ENCODE measurements at regions of chr20 and their contacts with region 1.

Region 1: DNA sequence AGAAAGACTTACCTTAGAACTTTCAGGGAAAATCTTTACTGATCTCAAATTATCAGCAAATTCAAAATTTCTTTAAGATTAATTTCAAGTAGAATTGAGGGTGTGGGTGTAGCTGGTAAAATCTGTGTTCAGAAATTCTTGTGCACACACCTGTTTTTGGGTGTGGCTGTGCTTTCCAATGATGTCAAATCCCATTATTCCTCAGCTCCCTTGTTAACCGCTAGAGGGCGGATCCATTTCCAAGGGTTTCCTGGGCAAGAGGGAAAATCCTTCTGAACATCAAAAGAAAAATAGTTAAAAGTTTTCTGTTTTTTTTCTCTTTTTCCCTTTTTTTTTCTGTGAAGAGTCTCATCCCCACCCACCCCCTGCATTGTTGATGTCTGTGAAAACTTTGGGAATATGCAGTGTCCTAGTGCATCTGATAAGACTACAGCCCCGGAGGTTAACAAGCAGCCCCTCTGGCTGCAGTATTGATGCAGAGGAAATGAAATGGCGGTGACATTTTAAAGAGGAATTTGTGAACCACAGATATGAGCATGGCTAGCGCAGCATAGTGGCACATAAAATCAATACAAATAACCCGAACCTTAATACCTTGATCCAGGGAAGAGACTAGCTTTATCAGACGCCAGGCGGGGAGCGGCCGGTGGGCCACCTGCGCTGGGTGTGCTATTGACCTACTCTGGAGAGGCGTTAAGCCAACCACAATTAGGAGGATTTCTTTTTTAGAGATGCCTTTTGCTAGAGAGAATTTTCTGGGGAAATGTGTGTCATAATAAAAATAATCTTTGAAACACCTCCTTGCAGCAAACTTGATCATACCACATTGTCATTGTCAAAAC is 130.9 kb downstream of the FOXA2 start:
- DNase-seq: peak; percentile 58 to 67
- H3K4me3 ChIP-seq: no peak overlapping the region
- H3K4me3 Mint-ChIP-seq: no peak overlapping the region
- H3K27ac Mint-ChIP-seq: no peak overlapping the region
- H3K4me1 ChIP-seq: no peaks in the 10 kb centered on the region
- H3K4me1 Mint-ChIP-seq: peaks cover 7% of the 10 kb centered on the region
- H3K27me3 ChIP-seq: no peaks in the 10 kb centered on the region; the same call in 1 of the 2 replicates
- H3K27me3 Mint-ChIP-seq: peaks cover 10% of the 10 kb centered on the region
- CTCF ChIP-seq: peak; percentile 80 to 89

Region 2: GRCh38 chr20:22296073-22296472 is 157.4 kb before region 1 on chr20:
- CTCF ChIA-PET with region 1: no interaction called
- POLR2A ChIA-PET with region 1: no interaction called
- intact Hi-C with region 1: no loop called
- DNase-seq: no peak
- H3K4me3 ChIP-seq: no peak overlapping the region
- H3K4me3 Mint-ChIP-seq: no peak overlapping the region
- H3K27ac Mint-ChIP-seq: no peak overlapping the region
- H3K4me1 ChIP-seq: no peaks in the 10 kb centered on the region
- H3K4me1 Mint-ChIP-seq: no peaks in the 10 kb centered on the region
- H3K27me3 ChIP-seq: no peaks in the 10 kb centered on the region
- H3K27me3 Mint-ChIP-seq: peaks cover 16% of the 10 kb centered on the region
- CTCF ChIP-seq: no peak

Region 3: DNA sequence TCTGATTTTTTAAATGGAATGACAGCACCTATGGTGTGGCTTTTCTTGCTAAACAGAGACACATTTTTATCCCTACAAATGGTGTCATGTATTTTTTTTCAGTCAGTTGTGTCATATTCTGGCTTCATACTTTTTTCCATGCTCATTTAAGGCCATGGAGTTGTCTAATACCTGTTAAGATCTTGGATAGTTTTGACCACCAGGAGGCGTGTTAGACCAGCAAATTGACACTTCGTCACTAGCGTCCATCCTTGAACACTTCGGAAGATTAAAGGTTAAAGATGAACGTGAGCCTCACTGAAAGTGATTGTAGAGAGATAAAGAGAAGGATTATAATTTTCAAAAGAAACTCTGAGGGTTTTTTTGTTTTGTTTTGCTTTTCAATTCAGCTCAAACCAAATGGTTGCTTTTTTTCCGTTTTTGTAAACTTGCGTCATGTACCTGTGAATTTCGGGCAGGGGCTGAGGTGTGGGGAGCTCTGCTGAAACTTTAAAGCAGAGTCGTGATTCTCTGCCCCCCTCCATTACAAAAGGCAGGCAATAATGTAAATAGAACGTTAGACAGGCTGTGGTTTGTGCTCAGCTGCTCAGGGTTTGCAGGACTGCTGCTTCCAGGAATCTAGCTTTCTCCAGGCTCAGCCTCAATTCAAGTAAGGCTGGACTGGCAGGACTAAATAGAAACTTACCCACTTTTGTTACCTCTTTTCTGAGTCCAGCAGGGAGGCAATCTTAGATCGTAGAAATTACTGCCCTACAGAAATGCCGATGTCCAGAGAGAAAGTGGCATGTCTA is 114.2 kb before region 1 on chr20:
- CTCF ChIA-PET with region 1: no interaction called
- POLR2A ChIA-PET with region 1: no interaction called
- intact Hi-C with region 1: loop called (anchors 1 kb)
- DNase-seq: peak; percentile 67 to 82
- H3K4me3 ChIP-seq: no peak overlapping the region
- H3K4me3 Mint-ChIP-seq: peak overlapping the region; percentile 46
- H3K27ac Mint-ChIP-seq: peak overlapping the region; percentile 32
- H3K4me1 ChIP-seq: no peaks in the 10 kb centered on the region
- H3K4me1 Mint-ChIP-seq: peaks cover 12% of the 10 kb centered on the region
- H3K27me3 ChIP-seq: no peaks in the 10 kb centered on the region
- H3K27me3 Mint-ChIP-seq: no peaks in the 10 kb centered on the region
- CTCF ChIP-seq: peak; percentile 80 to 83

Region 4: DNA sequence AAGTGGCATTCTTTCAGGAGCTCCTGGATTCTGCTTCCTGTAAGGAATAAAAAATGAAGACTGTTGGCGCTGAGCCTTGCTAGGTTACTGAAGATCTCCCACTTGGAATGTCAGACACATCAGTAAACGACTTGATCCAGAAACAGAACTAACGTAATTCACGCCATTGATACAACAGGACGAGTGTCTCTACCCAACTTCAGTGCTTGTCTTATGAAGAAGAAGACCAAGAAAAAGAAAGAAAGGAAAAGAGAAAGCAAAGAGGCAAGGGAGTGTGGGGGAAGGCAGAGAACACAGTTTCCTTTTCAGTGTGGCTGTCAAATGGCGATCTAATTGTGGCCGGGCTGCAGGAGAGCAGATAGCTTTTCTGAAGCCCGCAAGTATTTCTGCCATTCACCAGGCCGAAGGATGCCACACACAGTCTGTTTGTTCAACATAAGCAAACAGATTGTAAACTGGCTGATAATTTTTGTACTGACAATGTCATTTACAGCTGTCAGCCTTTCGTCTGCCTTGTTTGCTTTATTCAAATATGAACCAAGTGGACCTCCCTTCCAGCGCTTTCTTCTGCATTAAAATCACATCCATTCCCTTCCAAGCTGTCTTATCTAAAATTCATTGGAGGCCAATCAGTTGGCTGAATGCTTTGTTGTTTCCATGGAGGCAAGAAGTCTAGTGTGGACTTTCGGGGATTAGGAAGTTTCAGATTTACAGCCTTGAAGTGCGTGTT is 49.7 kb before region 1 on chr20:
- CTCF ChIA-PET with region 1: interaction called, 6 read pairs
- POLR2A ChIA-PET with region 1: interaction called, 6 read pairs
- intact Hi-C with region 1: loop called (anchors 1 kb)
- DNase-seq: peak; percentile 53 to 60
- H3K4me3 ChIP-seq: peak overlapping the region; percentile 24
- H3K4me3 Mint-ChIP-seq: peak overlapping the region; percentile 72
- H3K27ac Mint-ChIP-seq: peak overlapping the region; percentile 39
- H3K4me1 ChIP-seq: peaks cover 15% of the 10 kb centered on the region
- H3K4me1 Mint-ChIP-seq: peaks cover 35% of the 10 kb centered on the region
- H3K27me3 ChIP-seq: no peaks in the 10 kb centered on the region
- H3K27me3 Mint-ChIP-seq: no peaks in the 10 kb centered on the region
- CTCF ChIP-seq: no peak

Region 5: DNA sequence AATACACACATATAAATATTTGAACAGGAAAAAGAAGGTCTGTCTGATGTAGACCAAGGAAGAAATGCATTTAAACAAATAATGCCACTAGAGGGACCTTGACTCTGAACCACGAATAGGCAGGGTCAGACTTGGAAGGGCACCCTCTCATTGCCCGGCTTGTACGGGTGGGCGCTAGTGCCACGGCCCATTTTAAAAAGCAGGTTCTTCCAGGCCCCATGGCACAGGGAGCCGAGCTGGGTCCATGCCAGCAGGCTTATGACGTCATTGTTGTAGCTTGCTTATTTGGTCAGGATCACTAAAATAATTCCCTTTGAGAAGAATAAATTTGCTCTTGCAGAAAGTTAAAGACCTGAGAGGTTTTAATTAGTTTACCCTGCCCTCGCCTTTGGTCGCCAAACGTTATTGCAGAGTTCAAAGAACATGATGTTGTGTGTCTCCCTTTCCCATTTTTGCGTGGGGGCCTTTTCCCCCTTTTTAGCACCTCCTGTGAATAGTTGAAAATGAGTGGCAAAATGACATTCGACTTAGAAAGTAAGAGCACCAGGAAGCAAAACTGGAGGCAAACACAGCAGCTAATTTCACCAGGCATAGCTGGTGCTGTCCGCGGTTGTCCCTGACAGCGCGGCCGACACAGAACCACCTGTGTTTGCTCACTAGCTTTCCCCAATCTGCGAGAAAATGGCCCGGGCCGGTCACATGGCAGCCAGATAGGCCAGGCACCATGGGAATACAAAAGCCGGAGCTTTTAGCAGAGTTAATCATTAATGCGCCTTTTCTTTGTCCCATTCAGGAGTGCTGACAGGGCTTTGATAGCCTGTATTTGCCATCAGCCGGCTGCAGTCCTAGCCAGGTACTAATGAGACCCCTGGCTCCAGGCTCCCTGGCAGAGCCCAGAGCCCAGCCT is 37.1 kb after region 1 on chr20:
- CTCF ChIA-PET with region 1: interaction called, 16 read pairs
- POLR2A ChIA-PET with region 1: interaction called, 7 read pairs
- intact Hi-C with region 1: loop called (anchors 1 kb)
- DNase-seq: peak; percentile 98
- H3K4me3 ChIP-seq: peak overlapping the region; percentile 11
- H3K4me3 Mint-ChIP-seq: peak overlapping the region; percentile 68
- H3K27ac Mint-ChIP-seq: peak overlapping the region; percentile 98
- H3K4me1 ChIP-seq: peaks cover 32% of the 10 kb centered on the region
- H3K4me1 Mint-ChIP-seq: peaks cover 30% of the 10 kb centered on the region
- H3K27me3 ChIP-seq: no peaks in the 10 kb centered on the region
- H3K27me3 Mint-ChIP-seq: no peaks in the 10 kb centered on the region
- CTCF ChIP-seq: peak; percentile 11 to 30

Region 6: GRCh38 chr20:22684072-22684762 is 230.8 kb after region 1 on chr20:
- CTCF ChIA-PET with region 1: interaction called, 8 read pairs
- POLR2A ChIA-PET with region 1: no interaction called
- intact Hi-C with region 1: loop called (anchors 1 kb)
- DNase-seq: peak; percentile 81 to 86
- H3K4me3 ChIP-seq: no peak overlapping the region
- H3K4me3 Mint-ChIP-seq: no peak overlapping the region
- H3K27ac Mint-ChIP-seq: peak overlapping the region; percentile 32
- H3K4me1 ChIP-seq: peaks cover 23% of the 10 kb centered on the region
- H3K4me1 Mint-ChIP-seq: peaks cover 20% of the 10 kb centered on the region
- H3K27me3 ChIP-seq: no peaks in the 10 kb centered on the region
- H3K27me3 Mint-ChIP-seq: no peaks in the 10 kb centered on the region
- CTCF ChIP-seq: peak; percentile 89

Region 7: DNA sequence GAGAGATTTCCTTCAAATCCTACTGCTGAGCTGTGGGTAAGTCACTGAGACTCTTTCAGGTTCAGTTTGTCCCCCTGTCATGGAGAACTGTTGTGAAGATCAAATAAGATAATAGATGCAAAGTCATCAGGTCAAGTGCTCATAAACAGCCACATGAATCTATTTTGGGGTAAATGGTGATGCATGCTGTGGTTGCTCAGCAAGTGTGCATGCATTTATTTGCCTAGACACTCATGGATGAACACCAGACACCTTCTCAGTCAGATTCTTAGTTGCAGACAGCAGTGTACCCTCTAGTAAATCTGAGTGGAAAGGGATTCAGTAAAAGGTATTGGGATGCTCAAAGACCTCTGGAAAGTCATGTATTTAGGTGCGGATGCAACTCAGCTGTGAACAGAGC is 298.9 kb after region 1 on chr20:
- CTCF ChIA-PET with region 1: no interaction called
- POLR2A ChIA-PET with region 1: no interaction called
- intact Hi-C with region 1: no loop called
- DNase-seq: no peak
- H3K4me3 ChIP-seq: no peak overlapping the region
- H3K4me3 Mint-ChIP-seq: no peak overlapping the region
- H3K27ac Mint-ChIP-seq: no peak overlapping the region
- H3K4me1 ChIP-seq: no peaks in the 10 kb centered on the region
- H3K4me1 Mint-ChIP-seq: no peaks in the 10 kb centered on the region
- H3K27me3 ChIP-seq: no peaks in the 10 kb centered on the region
- H3K27me3 Mint-ChIP-seq: no peaks in the 10 kb centered on the region
- CTCF ChIP-seq: no peak

Measured in Caco-2 (cell line).